CD4-positive, alpha-beta T cell (primary cell): ENCODE measurements at regions of chr1 and their contacts with region 1.

Region 1: GRCh38 chr1:148372731-148373130 is 110.4 kb downstream of the PPIAL4G start:
- DNase-seq: peak in 11 of 14 experiments; percentile 19 to 88 (median 46)
- ATAC-seq: peak; percentile 69
- H3K4me3 ChIP-seq: peak overlapping the region; percentile 14
- H3K4me3 Mint-ChIP-seq: peak overlapping the region; percentile 79
- H3K27ac ChIP-seq: peak overlapping the region; percentile 80 to 82
- H3K27ac Mint-ChIP-seq: peak overlapping the region; percentile 88
- H3K4me1 ChIP-seq: peaks cover 46% of the 10 kb centered on the region
- H3K4me1 Mint-ChIP-seq: peaks cover 47% of the 10 kb centered on the region
- H3K27me3 ChIP-seq: no peaks in the 10 kb centered on the region
- H3K27me3 Mint-ChIP-seq: no peaks in the 10 kb centered on the region
- CTCF ChIP-seq: no peak

Region 2: GRCh38 chr1:148315071-148315811 is 57.5 kb before region 1 on chr1:
- CTCF ChIA-PET with region 1: no interaction called
- POLR2A ChIA-PET with region 1: no interaction called
- intact Hi-C with region 1: no loop called
- DNase-seq: no peak
- ATAC-seq: no peak
- H3K4me3 ChIP-seq: no peak overlapping the region
- H3K4me3 Mint-ChIP-seq: peak overlapping the region; percentile 0
- H3K27ac ChIP-seq: no peak overlapping the region
- H3K27ac Mint-ChIP-seq: no peak overlapping the region
- H3K4me1 ChIP-seq: peaks cover 16% of the 10 kb centered on the region
- H3K4me1 Mint-ChIP-seq: peaks cover 19% of the 10 kb centered on the region
- H3K27me3 ChIP-seq: peaks cover 10 to 21% of the 10 kb centered on the region in 2 experiments
- H3K27me3 Mint-ChIP-seq: peaks cover 62% of the 10 kb centered on the region
- CTCF ChIP-seq: no peak

Region 3: DNA sequence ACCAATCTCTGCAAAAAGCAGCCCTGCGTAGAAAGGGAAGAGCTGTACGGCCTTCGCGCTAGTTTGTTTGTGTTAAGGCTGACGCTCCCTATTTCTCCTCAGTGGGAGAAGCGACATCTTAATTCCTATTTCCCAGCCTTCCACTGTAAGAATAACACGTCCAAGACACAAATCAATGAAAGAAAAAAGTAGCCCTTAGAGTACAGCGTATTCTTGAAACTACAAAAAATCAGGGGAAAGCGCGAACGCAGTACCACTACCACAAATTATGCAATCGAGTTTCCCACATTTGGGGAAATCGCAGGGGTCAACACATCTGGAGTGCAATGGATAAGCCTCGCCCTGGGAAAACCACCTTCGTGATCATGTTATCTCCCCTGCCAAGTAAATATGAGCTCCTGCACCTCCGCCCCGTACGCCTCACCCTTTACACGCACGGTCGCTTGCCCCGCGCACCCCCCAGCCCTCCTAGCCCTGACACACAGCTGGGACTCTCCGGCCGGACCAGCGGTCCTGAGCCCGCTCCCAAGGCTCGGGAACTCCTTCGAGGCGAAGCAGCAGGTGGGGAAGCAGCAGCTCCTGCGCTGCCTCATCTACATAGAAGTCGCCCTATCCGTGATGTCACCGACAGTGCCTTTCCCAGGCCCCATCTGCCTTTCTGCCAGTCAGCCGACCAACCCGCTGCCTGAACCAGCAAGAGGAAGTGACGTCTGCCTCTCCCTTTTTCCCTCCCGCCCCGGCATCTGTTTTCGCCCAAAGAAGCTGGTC is 15.7 kb after region 1 on chr1:
- CTCF ChIA-PET with region 1: interaction called, 4 read pairs
- POLR2A ChIA-PET with region 1: interaction called, 76 read pairs
- intact Hi-C with region 1: loop called in 1 of 2 experiments (anchors 2 kb)
- DNase-seq: peak; percentile 76 to 95 (median 82)
- ATAC-seq: peak; percentile 89
- H3K4me3 ChIP-seq: peak overlapping the region; percentile 61
- H3K4me3 Mint-ChIP-seq: peak overlapping the region; percentile 94
- H3K27ac ChIP-seq: peak overlapping the region; percentile 86 to 93
- H3K27ac Mint-ChIP-seq: peak overlapping the region; percentile 98
- H3K4me1 ChIP-seq: peaks cover 29% of the 10 kb centered on the region
- H3K4me1 Mint-ChIP-seq: peaks cover 44% of the 10 kb centered on the region
- H3K27me3 ChIP-seq: no peaks in the 10 kb centered on the region
- H3K27me3 Mint-ChIP-seq: no peaks in the 10 kb centered on the region
- CTCF ChIP-seq: no peak

Region 4: DNA sequence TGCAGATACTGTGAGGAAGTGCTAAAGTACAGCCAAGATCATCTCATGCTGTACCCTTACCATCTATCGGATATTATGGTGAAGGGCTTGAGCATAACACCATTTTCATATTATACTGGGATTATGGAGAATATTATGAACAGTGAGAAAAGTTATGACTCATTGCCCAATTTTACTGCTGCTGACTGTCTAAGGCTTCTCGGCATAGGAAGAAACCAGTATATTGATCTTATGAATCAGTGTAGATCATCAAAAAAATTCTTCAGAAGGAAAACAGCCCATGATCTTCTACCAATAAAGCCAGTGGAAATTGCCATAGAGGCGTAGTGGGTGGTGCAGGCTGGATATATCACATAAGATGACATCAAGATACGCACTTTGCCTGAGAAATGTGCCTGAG is 62.7 kb after region 1 on chr1:
- CTCF ChIA-PET with region 1: interaction called, 3 read pairs
- POLR2A ChIA-PET with region 1: interaction called, 3 read pairs
- intact Hi-C with region 1: loop called (anchors 2 to 5 kb)
- DNase-seq: no peak
- ATAC-seq: no peak
- H3K4me3 ChIP-seq: no peak overlapping the region
- H3K4me3 Mint-ChIP-seq: no peak overlapping the region
- H3K27ac ChIP-seq: no peak overlapping the region
- H3K27ac Mint-ChIP-seq: peak overlapping the region; percentile 19
- H3K4me1 ChIP-seq: peaks cover 19% of the 10 kb centered on the region
- H3K4me1 Mint-ChIP-seq: peaks cover 81% of the 10 kb centered on the region
- H3K27me3 ChIP-seq: no peaks in the 10 kb centered on the region
- H3K27me3 Mint-ChIP-seq: no peaks in the 10 kb centered on the region
- CTCF ChIP-seq: no peak